Ovary (tissue), 10 donors: ENCODE measurements at regions of chr9 and their contacts with region 1.

Region 1: GRCh38 chr9:98034593-98035546 is 21.7 kb upstream of the NANS start:
- DNase-seq: peak; percentile 77 to 90 (median 81)
- H3K4me3 ChIP-seq: no peak overlapping the region
- H3K27ac ChIP-seq: no peak overlapping the region
- H3K4me1 ChIP-seq: no peaks in the 10 kb centered on the region
- H3K27me3 ChIP-seq: no peaks in the 10 kb centered on the region
- CTCF ChIP-seq: peak; percentile 60 to 69 (median 64)
- EP300 ChIP-seq: no peak
- POLR2A ChIP-seq: no peak

Region 2: GRCh38 chr9:97982683-97983588 is 51.9 kb before region 1 on chr9 and contains the start of gene ANP32B:
- intact Hi-C with region 1: loop called in 1 of 4 experiments (anchors 10 kb)
- DNase-seq: peak; percentile 83 to 93 (median 89)
- H3K4me3 ChIP-seq: peak within 1 kb of the TSS; percentile 92
- H3K27ac ChIP-seq: peak within 1 kb of the TSS; percentile 93 to 98
- H3K4me1 ChIP-seq: peaks cover 4% of the 10 kb centered on the region
- H3K27me3 ChIP-seq: no peaks in the 10 kb centered on the region
- CTCF ChIP-seq: peak; percentile 89 to 97 (median 95)
- EP300 ChIP-seq: no peak
- POLR2A ChIP-seq: peak; percentile 17
- total RNA-seq, gene ANP32B: 41.4 to 167 (median 137) TPM

Region 3: GRCh38 chr9:98021306-98022040 is 13.4 kb before region 1 on chr9:
- intact Hi-C with region 1: loop called in 1 of 4 experiments (anchors 1 kb)
- DNase-seq: no peak
- H3K4me3 ChIP-seq: no peak overlapping the region
- H3K27ac ChIP-seq: no peak overlapping the region
- H3K4me1 ChIP-seq: peaks cover 1% of the 10 kb centered on the region
- H3K27me3 ChIP-seq: no peaks in the 10 kb centered on the region
- CTCF ChIP-seq: no peak
- EP300 ChIP-seq: no peak
- POLR2A ChIP-seq: no peak

Region 4: DNA sequence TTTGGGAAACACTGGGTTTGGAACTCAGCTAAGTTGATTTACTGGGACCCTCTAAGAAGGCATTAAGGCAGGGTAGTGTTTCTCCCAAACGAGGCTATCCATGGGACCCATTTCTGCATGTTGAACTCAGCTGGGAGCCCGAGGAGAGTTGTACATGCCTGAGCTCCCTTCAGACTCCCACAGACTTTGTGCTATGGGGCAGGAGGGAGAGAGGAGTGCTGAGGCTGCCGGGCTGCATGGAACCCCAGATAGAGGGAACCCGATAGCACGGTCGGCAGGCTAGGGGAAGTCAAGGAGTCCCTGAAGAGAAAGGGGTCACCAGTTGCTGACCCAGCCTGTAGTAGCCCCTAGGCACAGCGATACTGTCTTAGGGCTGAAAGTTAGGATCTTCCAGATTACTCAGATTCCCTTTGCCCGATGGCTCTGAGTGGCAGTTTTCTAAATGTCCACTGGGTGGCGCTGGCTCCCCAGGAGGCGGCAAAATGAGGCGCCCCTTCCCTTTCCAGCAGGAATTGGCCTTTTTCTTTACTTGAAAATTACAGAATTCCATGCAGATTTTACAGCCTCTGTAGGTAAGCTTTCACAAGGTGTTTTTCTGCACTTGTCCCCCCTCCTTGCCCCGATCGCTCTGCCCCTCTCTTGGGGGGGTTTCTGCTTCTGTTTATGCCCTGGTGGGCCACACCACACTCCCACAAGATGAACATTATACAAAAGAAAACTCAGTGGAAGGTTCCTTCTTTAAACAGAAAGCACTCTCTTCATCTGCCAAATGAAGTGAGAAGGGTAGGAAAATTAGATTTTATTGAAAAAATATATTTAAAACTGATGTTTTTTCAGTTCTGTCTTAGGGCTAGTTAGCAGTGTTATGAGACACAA is 39.5 kb after region 1 on chr9:
- intact Hi-C with region 1: no loop called
- DNase-seq: peak; percentile 33 to 72 (median 60)
- H3K4me3 ChIP-seq: no peak overlapping the region
- H3K27ac ChIP-seq: no peak overlapping the region
- H3K4me1 ChIP-seq: peaks cover 3% of the 10 kb centered on the region
- H3K27me3 ChIP-seq: no peaks in the 10 kb centered on the region
- CTCF ChIP-seq: peak; percentile 38 to 69 (median 42)
- EP300 ChIP-seq: no peak
- POLR2A ChIP-seq: no peak

Region 5: DNA sequence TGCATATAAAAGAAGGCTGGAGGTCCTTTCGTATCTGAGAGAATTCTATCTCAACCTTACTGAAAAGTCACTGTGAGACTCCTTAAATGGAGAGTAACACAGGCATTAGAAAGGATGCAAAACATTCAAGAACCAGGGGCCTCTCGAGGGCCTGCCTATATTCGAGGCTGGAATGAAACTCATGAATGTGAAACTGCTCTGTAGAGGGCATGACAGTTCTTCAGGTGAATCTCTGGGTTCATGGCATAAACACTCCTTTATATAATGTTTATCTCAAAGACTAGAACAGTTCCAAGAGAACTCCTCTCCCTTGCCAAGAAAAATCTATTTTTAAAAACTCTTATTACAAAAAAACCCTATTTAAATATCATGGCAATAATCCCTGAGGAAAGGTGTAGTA is 1301.1 kb after region 1 on chr9:
- intact Hi-C with region 1: loop called in 1 of 4 experiments (anchors 5 kb)
- DNase-seq: no peak
- H3K4me3 ChIP-seq: no peak overlapping the region
- H3K27ac ChIP-seq: no peak overlapping the region
- H3K4me1 ChIP-seq: no peaks in the 10 kb centered on the region
- H3K27me3 ChIP-seq: no peaks in the 10 kb centered on the region
- CTCF ChIP-seq: no peak
- EP300 ChIP-seq: no peak
- POLR2A ChIP-seq: no peak